ENCODE measurements at regions of chr6 and their contacts with region 1.

Region 1: DNA sequence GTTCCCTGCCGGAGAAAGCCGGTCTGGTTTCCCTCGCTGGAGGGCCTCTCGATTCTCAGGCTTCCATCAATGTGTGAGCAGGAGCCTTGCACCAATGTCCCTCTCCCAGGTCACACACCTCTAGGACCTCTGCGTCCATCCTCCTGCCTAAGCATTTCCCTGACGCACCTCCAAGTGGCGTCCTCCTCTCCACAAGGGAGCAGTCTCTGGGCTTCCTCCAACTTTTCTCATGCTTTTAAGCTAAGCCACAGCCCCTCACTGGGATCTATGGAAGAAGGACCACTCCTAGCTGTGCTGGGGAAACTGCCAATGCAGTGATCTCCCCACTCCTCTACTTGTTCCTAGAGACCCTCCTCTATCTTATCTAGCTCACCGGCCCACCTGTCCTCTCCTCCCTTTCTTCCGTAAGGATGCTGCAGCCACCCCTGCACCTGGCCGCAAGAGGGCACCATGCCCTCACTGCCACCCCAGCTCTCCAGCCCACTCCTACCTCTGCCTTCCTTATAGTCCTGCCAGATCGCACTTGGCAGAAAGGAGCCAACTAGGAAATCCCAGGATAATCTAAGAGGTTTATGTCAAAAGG is 258.7 kb downstream of the LRFN2 start:
- DNase-seq: peak; percentile 33
- ATAC-seq: peak; percentile 97
- H3K4me3 ChIP-seq: no peak overlapping the region
- H3K27ac ChIP-seq: no peak overlapping the region
- H3K4me1 ChIP-seq: no peaks in the 10 kb centered on the region; a peak in 1 of 4 replicates
- H3K27me3 ChIP-seq: peaks cover 69% of the 10 kb centered on the region
- CTCF ChIP-seq: peak; percentile 94 to 98 (median 96)
- POLR2A ChIP-seq: no peak
- RAD21 ChIP-seq: peak; percentile 88

Region 2: GRCh38 chr6:40587240-40588069 is 259.0 kb after region 1 on chr6 and contains the start of gene LRFN2:
- CTCF ChIA-PET with region 1: interaction called, 8 read pairs
- POLR2A ChIA-PET with region 1: no interaction called
- RAD21 ChIA-PET with region 1: interaction called in 1 of 2 experiments, 5 read pairs
- intact Hi-C with region 1: loop called (anchors 1 kb)
- DNase-seq: peak; percentile 38
- ATAC-seq: peak; percentile 95
- H3K4me3 ChIP-seq: peak within 1 kb of the TSS in 1 of 2 experiments; percentile 34; a peak in 2 of 4 replicates
- H3K27ac ChIP-seq: no peak within 1 kb of the TSS; the same call in 1 of the 2 replicates
- H3K4me1 ChIP-seq: peaks cover 0 to 12% of the 10 kb centered on the region in 2 experiments; a peak in 2 of 4 replicates
- H3K27me3 ChIP-seq: peaks cover 17% of the 10 kb centered on the region
- CTCF ChIP-seq: peak in 2 of 3 experiments; percentile 37 to 60; a peak in 4 of 6 replicates
- POLR2A ChIP-seq: no peak
- RAD21 ChIP-seq: peak; percentile 18; the same call in 1 of the 2 replicates
- total RNA-seq, gene LRFN2: not detected

Region 3: DNA sequence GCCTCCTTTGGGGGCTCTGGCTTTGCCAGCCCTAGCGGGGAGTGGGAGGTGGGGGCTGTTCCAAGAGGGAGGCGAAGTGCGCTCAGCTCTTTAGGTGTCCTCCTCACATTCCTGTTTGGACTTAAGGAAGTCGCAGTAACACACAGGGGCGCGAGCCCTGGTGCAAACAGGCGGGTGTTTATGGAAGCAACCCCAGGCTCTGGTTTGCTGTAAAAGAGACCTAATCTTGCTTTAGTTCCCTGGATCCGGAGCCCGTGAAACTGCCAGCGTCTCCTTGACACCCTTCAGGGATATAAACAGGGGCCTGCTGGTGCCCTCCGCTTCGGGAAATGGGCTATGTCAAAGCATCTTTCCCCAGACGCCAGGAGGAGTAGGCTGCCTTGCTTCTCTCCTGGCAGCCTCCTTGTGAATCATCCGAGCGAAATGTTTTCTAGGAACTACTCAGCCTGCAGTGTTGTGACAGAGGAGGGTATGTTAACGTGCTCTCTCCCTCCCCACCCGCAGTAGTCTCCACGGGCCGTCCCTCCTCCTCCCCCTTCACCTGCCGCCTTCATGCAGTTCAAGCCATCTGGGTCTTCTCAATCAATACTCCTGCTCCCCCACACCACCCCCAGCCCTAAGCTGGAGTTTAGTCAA is 426.7 kb after region 1 on chr6:
- CTCF ChIA-PET with region 1: no interaction called
- POLR2A ChIA-PET with region 1: no interaction called
- RAD21 ChIA-PET with region 1: no interaction called
- intact Hi-C with region 1: no loop called
- DNase-seq: no peak
- ATAC-seq: no peak
- H3K4me3 ChIP-seq: no peak overlapping the region
- H3K27ac ChIP-seq: no peak overlapping the region
- H3K4me1 ChIP-seq: no peaks in the 10 kb centered on the region
- H3K27me3 ChIP-seq: peaks cover 36% of the 10 kb centered on the region
- CTCF ChIP-seq: no peak
- POLR2A ChIP-seq: no peak
- RAD21 ChIP-seq: no peak

Region 4: GRCh38 chr6:40804905-40805304 is 476.4 kb after region 1 on chr6:
- CTCF ChIA-PET with region 1: no interaction called
- POLR2A ChIA-PET with region 1: no interaction called
- RAD21 ChIA-PET with region 1: no interaction called
- intact Hi-C with region 1: loop called (anchors 1 kb)
- DNase-seq: no peak
- ATAC-seq: peak; percentile 49; the same call in 1 of the 2 replicates
- H3K4me3 ChIP-seq: no peak overlapping the region
- H3K27ac ChIP-seq: no peak overlapping the region
- H3K4me1 ChIP-seq: peaks cover 0 to 6% of the 10 kb centered on the region in 2 experiments; a peak in 1 of 4 replicates
- H3K27me3 ChIP-seq: no peaks in the 10 kb centered on the region
- CTCF ChIP-seq: peak; percentile 30 to 70 (median 60); a peak in 5 of 6 replicates
- POLR2A ChIP-seq: no peak
- RAD21 ChIP-seq: peak; percentile 56

Region 5: GRCh38 chr6:40819182-40819834 is 490.8 kb after region 1 on chr6:
- CTCF ChIA-PET with region 1: interaction called, 7 read pairs
- POLR2A ChIA-PET with region 1: no interaction called
- RAD21 ChIA-PET with region 1: no interaction called
- intact Hi-C with region 1: loop called (anchors 1 kb)
- DNase-seq: no peak
- ATAC-seq: no peak
- H3K4me3 ChIP-seq: no peak overlapping the region
- H3K27ac ChIP-seq: no peak overlapping the region
- H3K4me1 ChIP-seq: no peaks in the 10 kb centered on the region
- H3K27me3 ChIP-seq: no peaks in the 10 kb centered on the region
- CTCF ChIP-seq: no peak
- POLR2A ChIP-seq: no peak
- RAD21 ChIP-seq: no peak

Measured in HCT116 (cell line).